ENCODE measurements at regions of chr19 and their contacts with region 1.

Region 1: DNA sequence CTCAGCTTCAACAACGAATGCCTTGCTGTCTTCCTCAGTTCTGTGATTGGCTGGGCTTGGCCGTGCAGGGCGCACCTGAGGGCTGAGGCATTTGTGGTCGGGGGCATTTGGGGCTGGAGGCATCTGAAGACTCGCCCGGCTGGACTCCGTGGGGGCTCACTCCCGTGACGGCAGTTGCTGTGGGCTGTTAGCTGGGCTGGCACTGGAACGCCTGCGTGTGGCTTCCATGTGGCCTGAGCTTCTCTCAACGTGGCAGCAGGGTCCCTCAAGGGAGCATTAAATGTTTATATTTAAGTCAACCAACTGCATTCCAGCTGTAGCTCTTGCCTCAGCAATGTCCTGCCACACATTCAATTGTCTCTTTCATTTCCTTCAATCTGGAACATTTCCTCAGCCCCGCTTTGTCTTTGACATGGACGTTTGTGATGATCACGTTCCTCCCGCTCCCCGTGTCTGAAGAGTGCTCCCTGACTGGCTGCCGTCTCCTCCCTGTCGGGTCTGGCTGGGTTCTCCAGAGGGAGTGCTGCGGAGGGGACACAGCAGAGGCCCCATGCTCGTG is 21.0 kb downstream of the CCDC8 start:
- DNase-seq: no peak
- H3K4me3 ChIP-seq: peak overlapping the region; percentile 22; the same call in 1 of the 2 replicates
- H3K27ac ChIP-seq: peak overlapping the region; percentile 78
- H3K27me3 ChIP-seq: no peaks in the 10 kb centered on the region
- CTCF ChIP-seq: no peak

Region 2: GRCh38 chr19:45506246-45506990 is 885.9 kb before region 1 on chr19:
- CTCF ChIA-PET with region 1: interaction called, 10 read pairs
- POLR2A ChIA-PET with region 1: no interaction called
- DNase-seq: peak; percentile 66
- H3K4me3 ChIP-seq: peak overlapping the region; percentile 95
- H3K27ac ChIP-seq: peak overlapping the region; percentile 87
- H3K27me3 ChIP-seq: no peaks in the 10 kb centered on the region
- CTCF ChIP-seq: peak; percentile 56

Region 3: GRCh38 chr19:46413262-46414031 is 21.1 kb after region 1 on chr19 and contains the start of gene CCDC8:
- CTCF ChIA-PET with region 1: interaction called, 11 read pairs
- POLR2A ChIA-PET with region 1: interaction called, 6 read pairs
- DNase-seq: peak; percentile 87
- H3K4me3 ChIP-seq: peak within 1 kb of the TSS; percentile 74
- H3K27ac ChIP-seq: peak within 1 kb of the TSS; percentile 65
- H3K27me3 ChIP-seq: peaks cover 3% of the 10 kb centered on the region
- CTCF ChIP-seq: no peak
- polyA plus RNA-seq, gene CCDC8: 9.2 and 10.5 TPM in 2 replicates

Region 4: DNA sequence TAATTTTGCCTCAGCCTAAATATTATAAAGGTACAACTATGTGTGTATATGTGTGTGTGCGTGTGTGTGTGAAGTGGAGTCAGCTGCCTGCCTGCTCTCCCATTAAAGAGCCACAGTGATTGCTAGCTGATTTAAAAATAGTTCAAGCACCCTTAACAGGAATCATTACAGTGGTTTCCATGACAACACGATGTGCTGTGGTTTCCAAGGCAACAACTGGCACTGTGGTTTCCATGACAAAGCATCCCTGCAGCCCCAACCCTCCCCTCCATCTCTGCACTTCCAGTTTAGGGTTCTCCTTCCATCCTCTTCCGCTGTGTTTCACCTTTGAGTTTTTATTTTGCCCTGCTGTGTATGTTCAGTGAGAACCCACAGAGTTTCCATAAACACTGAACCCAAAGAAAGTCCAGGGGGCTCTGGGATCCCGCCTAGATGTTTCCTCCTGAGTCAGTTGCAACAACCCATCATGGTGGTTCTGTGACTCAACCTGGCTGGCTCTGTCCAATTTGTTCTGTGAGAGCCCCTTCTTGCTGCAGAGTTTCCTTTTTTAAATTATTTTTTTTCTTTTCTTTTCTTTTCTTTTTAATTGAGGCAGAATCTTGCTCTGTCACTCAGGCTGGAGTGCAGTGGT is 86.1 kb after region 1 on chr19:
- CTCF ChIA-PET with region 1: interaction called, 60 read pairs
- POLR2A ChIA-PET with region 1: no interaction called
- DNase-seq: no peak
- H3K4me3 ChIP-seq: no peak overlapping the region
- H3K27ac ChIP-seq: no peak overlapping the region
- H3K27me3 ChIP-seq: no peaks in the 10 kb centered on the region
- CTCF ChIP-seq: no peak

Region 5: DNA sequence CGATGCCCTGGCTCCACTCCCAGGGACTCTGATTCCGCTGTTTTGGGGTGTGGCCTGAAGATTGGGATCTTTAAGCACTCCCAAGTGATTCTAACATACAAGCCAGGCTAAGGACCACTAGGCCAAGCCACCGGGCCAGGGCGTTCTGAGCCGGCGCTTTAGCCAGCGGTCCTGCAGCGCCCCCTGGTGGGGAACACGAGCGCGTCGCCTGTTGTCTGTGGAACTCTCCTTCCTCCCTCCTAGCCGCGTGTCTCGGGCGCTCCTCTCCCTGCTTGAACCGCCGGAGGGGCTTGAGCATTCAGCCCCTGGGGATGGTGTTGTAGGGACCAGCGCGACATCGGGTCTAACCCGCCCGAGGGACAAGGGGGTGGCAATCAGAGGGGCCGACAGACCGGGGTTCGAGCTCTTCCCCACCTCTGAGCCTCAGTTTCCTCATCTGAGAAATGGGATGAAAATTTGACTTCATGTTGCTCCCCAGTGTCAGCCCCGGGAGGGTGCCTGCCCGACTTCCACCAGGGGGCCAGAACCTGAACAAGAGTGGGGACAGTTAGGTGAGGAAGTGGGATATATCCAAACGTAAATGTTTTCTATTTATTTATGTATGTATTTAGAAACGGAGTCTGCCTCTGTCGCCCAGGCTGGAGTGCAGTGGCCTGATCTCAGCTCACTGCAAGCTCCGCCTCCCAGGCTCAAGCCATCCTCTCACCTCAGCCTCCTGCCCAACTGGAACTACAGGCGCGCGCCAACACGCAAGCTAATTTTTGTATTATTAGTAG is 121.3 kb after region 1 on chr19:
- CTCF ChIA-PET with region 1: interaction called, 34 read pairs
- POLR2A ChIA-PET with region 1: no interaction called
- DNase-seq: no peak
- H3K4me3 ChIP-seq: no peak overlapping the region
- H3K27ac ChIP-seq: no peak overlapping the region
- H3K27me3 ChIP-seq: peaks cover 5% of the 10 kb centered on the region
- CTCF ChIP-seq: peak; percentile 70

Region 6: GRCh38 chr19:46542428-46543230 is 150.3 kb after region 1 on chr19:
- CTCF ChIA-PET with region 1: interaction called, 24 read pairs
- POLR2A ChIA-PET with region 1: no interaction called
- DNase-seq: peak; percentile 76
- H3K4me3 ChIP-seq: no peak overlapping the region
- H3K27ac ChIP-seq: no peak overlapping the region
- H3K27me3 ChIP-seq: peaks cover 7% of the 10 kb centered on the region
- CTCF ChIP-seq: peak; percentile 81

Measured in AG04450 (cell line).